Activated CD4-positive, alpha-beta T cell treated with anti-CD3 and anti-CD28 coated beads for 36 hours (primary cell): ENCODE measurements at regions of chr19 and their contacts with region 1.

Region 1: GRCh38 chr19:737581-738093 is 13.3 kb upstream of the MISP start:
- DNase-seq: peak; percentile 76
- ATAC-seq: peak; percentile 79
- H3K4me3 Mint-ChIP-seq: no peak overlapping the region
- H3K27ac Mint-ChIP-seq: no peak overlapping the region
- H3K4me1 Mint-ChIP-seq: no peaks in the 10 kb centered on the region
- H3K27me3 Mint-ChIP-seq: no peaks in the 10 kb centered on the region

Region 2: GRCh38 chr19:703651-704446 is 33.8 kb before region 1 on chr19:
- CTCF ChIA-PET with region 1: interaction called, 4 read pairs
- POLR2A ChIA-PET with region 1: no interaction called
- intact Hi-C with region 1: loop called in 1 of 2 experiments (anchors 5 kb)
- DNase-seq: peak; percentile 90
- ATAC-seq: peak; percentile 74
- H3K4me3 Mint-ChIP-seq: no peak overlapping the region
- H3K27ac Mint-ChIP-seq: no peak overlapping the region
- H3K4me1 Mint-ChIP-seq: peaks cover 6% of the 10 kb centered on the region
- H3K27me3 Mint-ChIP-seq: peaks cover 14% of the 10 kb centered on the region